ENCODE measurements at regions of chr19 and their contacts with region 1.

Region 1: GRCh38 chr19:48954595-48955310 is at the start of gene BAX:
- DNase-seq: peak; percentile 97 to 99
- ATAC-seq: peak; percentile 91 to 94 (median 92)
- H3K4me3 ChIP-seq: peak within 1 kb of the TSS; percentile 98
- H3K27ac ChIP-seq: peak within 1 kb of the TSS; percentile 88
- H3K4me1 ChIP-seq: peaks cover 15% of the 10 kb centered on the region
- H3K27me3 ChIP-seq: no peaks in the 10 kb centered on the region
- CTCF ChIP-seq: no peak
- total RNA-seq, gene BAX: 16.8 to 24.4 (median 22.0) TPM

Region 2: GRCh38 chr19:48896191-48896720 is 58.5 kb before region 1 on chr19:
- intact Hi-C with region 1: no loop called
- DNase-seq: peak; percentile 64 to 82
- ATAC-seq: peak in 3 of 4 donors; percentile 35 to 49 (median 45)
- H3K4me3 ChIP-seq: peak overlapping the region; percentile 61
- H3K27ac ChIP-seq: no peak overlapping the region
- H3K4me1 ChIP-seq: peaks cover 5% of the 10 kb centered on the region
- H3K27me3 ChIP-seq: peaks cover 0 to 4% (median 1%) of the 10 kb centered on the region in 3 donors
- CTCF ChIP-seq: no peak

Region 3: GRCh38 chr19:48907671-48908070 is 47.1 kb before region 1 on chr19:
- intact Hi-C with region 1: loop called in 1 of 2 experiments (anchors 5 kb)
- DNase-seq: no peak
- ATAC-seq: peak in 2 of 4 donors; percentile 5 to 13
- H3K4me3 ChIP-seq: no peak overlapping the region
- H3K27ac ChIP-seq: peak overlapping the region; percentile 72
- H3K4me1 ChIP-seq: peaks cover 13% of the 10 kb centered on the region
- H3K27me3 ChIP-seq: no peaks in the 10 kb centered on the region
- CTCF ChIP-seq: no peak